PC-9 (cell line): ENCODE measurements at regions of chr7 and their contacts with region 1.

Region 1: DNA sequence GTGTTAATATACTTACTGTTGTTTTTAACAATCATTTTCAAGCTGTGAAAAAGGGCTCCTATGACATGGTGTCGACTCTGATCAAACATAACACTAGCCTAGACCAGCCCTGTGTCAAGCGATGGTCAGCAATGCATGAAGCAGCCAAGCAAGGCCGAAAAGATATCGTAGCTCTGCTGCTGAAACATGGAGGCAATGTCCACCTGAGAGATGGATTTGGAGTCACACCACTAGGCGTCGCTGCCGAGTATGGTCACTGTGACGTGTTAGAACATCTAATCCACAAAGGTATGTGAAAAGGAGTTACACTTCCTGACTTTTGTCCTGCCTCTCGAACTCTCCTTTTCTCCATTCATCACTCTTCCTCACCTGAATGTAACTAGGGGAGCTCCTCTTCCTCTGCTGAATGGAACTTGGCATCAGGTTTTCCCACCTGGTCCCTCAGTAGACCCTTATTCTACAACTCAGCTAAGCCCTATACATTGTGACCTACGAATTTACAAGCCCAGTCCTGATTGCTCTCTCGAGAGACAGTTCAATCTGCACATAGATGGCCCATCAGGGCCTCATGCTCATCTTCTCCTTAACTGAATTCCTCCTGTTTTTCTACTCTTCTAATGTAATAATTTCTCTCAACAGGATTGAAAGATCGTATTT is 23.0 kb downstream of the ASB15 start:
- DNase-seq: peak in 1 of 2 experiments; percentile 58
- H3K4me3 ChIP-seq: no peak overlapping the region
- H3K27ac ChIP-seq: no peak overlapping the region
- H3K4me1 ChIP-seq: 0 out of 2 replicates have a peak, but pooled peaks cover 9% of the 10 kb centered on the region
- H3K27me3 ChIP-seq: no peaks in the 10 kb centered on the region
- CTCF ChIP-seq: peak; percentile 62

Region 2: GRCh38 chr7:121924269-121925186 is 1700.1 kb before region 1 on chr7:
- CTCF ChIA-PET with region 1: no interaction called
- POLR2A ChIA-PET with region 1: interaction called, 10 read pairs
- intact Hi-C with region 1: no loop called
- DNase-seq: no peak
- H3K4me3 ChIP-seq: no peak overlapping the region
- H3K27ac ChIP-seq: no peak overlapping the region
- H3K4me1 ChIP-seq: no peaks in the 10 kb centered on the region
- H3K27me3 ChIP-seq: no peaks in the 10 kb centered on the region
- CTCF ChIP-seq: no peak